GM12878 (cell line): ENCODE measurements at regions of chrX and their contacts with region 1.

Region 1: GRCh38 chrX:12946838-12947544 is 27.9 kb upstream of the TMSB4X start:
- DNase-seq: peak; percentile 85
- ATAC-seq: peak; percentile 9
- H3K4me3 ChIP-seq: no peak overlapping the region
- H3K27ac ChIP-seq: peak overlapping the region; percentile 97
- H3K4me1 ChIP-seq: peaks cover 41% of the 10 kb centered on the region
- H3K27me3 ChIP-seq: no peaks in the 10 kb centered on the region
- CTCF ChIP-seq: peak; percentile 97 to 100 (median 99); a peak in 5 of 6 replicates
- EP300 ChIP-seq: no peak
- POLR2A ChIP-seq: no peak
- RAD21 ChIP-seq: peak; percentile 98

Region 2: GRCh38 chrX:12794654-12795053 is 152.3 kb before region 1 on chrX:
- CTCF ChIA-PET with region 1: no interaction called
- POLR2A ChIA-PET with region 1: no interaction called
- RAD21 ChIA-PET with region 1: no interaction called
- SMC1A ChIA-PET with region 1: no interaction called
- in situ Hi-C with region 1: no loop called
- intact Hi-C with region 1: no loop called
- DNase-seq: no peak
- ATAC-seq: no peak
- H3K4me3 ChIP-seq: no peak overlapping the region
- H3K27ac ChIP-seq: no peak overlapping the region
- H3K4me1 ChIP-seq: no peaks in the 10 kb centered on the region
- H3K27me3 ChIP-seq: no peaks in the 10 kb centered on the region
- CTCF ChIP-seq: no peak
- EP300 ChIP-seq: no peak
- POLR2A ChIP-seq: no peak
- RAD21 ChIP-seq: no peak

Region 3: GRCh38 chrX:12936947-12937346 is 10.0 kb before region 1 on chrX:
- CTCF ChIA-PET with region 1: interaction called, 15 read pairs
- POLR2A ChIA-PET with region 1: no interaction called
- RAD21 ChIA-PET with region 1: interaction called, 7 read pairs
- SMC1A ChIA-PET with region 1: interaction called, 8 read pairs
- in situ Hi-C with region 1: no loop called
- intact Hi-C with region 1: no loop called
- DNase-seq: no peak
- ATAC-seq: no peak
- H3K4me3 ChIP-seq: no peak overlapping the region
- H3K27ac ChIP-seq: no peak overlapping the region
- H3K4me1 ChIP-seq: no peaks in the 10 kb centered on the region
- H3K27me3 ChIP-seq: no peaks in the 10 kb centered on the region
- CTCF ChIP-seq: no peak
- EP300 ChIP-seq: no peak
- POLR2A ChIP-seq: no peak
- RAD21 ChIP-seq: no peak

Region 4: GRCh38 chrX:13013363-13014110 is 66.5 kb after region 1 on chrX:
- CTCF ChIA-PET with region 1: interaction called, 123 read pairs
- POLR2A ChIA-PET with region 1: interaction called, 17 read pairs
- RAD21 ChIA-PET with region 1: interaction called, 38 read pairs
- SMC1A ChIA-PET with region 1: interaction called, 409 read pairs
- in situ Hi-C with region 1: no loop called
- intact Hi-C with region 1: no loop called
- DNase-seq: no peak
- ATAC-seq: peak; percentile 87
- H3K4me3 ChIP-seq: peak overlapping the region; percentile 14
- H3K27ac ChIP-seq: peak overlapping the region; percentile 96
- H3K4me1 ChIP-seq: peaks cover 63% of the 10 kb centered on the region
- H3K27me3 ChIP-seq: no peaks in the 10 kb centered on the region
- CTCF ChIP-seq: no peak
- EP300 ChIP-seq: 0 out of 4 replicates have a peak, but pooled peaks of 1 of the 2 experiments have one; percentile 2
- POLR2A ChIP-seq: no peak
- RAD21 ChIP-seq: no peak

Region 5: DNA sequence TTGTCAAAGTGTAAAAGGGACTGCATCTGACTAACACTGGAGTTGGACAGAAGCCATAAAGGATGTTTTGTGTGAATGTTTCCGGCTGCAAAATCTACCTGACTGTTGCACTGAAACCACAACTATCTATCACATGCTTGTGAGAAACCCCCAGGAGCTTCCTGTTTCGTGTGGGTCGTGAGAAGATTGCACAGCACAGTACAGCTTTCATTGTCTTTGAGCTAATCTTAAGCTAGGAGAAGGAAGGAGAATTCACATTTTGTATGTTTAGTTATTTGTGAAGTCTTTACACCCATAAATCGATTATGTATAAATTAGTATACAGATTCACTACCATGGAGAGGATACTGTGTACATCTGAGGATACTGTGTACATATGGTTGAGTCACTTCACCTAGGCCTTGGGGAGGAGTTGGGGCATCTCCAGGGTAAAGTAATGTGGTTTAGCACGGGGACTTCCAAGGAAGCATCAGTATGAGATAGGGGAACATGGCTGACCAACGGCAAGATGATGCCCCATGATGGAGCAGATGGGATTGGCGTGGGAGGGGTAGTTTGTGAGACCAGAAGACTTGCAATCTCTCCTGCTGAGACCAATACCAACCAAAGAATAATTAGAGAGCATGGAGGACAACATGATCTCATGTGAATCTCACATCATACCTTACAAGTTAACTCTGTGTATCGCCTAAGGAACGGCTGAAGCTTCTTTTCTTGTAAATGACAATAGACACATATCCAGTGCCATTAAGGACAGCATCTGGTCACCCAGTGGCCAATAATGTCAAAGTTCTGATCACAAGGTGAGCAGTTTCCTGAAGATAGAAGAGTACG is 140.5 kb after region 1 on chrX:
- CTCF ChIA-PET with region 1: interaction called, 312 read pairs
- POLR2A ChIA-PET with region 1: interaction called, 63 read pairs
- RAD21 ChIA-PET with region 1: interaction called, 549 read pairs
- SMC1A ChIA-PET with region 1: interaction called, 632 read pairs
- in situ Hi-C with region 1: loop called (anchors 5 kb)
- intact Hi-C with region 1: loop called (anchors 1 kb)
- DNase-seq: peak; percentile 99
- ATAC-seq: peak; percentile 54
- H3K4me3 ChIP-seq: no peak overlapping the region; the same call in 1 of the 2 replicates
- H3K27ac ChIP-seq: peak overlapping the region; percentile 100
- H3K4me1 ChIP-seq: peaks cover 89% of the 10 kb centered on the region
- H3K27me3 ChIP-seq: no peaks in the 10 kb centered on the region
- CTCF ChIP-seq: no peak
- EP300 ChIP-seq: peak; percentile 71 to 90
- POLR2A ChIP-seq: 0 out of 2 replicates have a peak, but pooled peaks have one; percentile 45
- RAD21 ChIP-seq: 0 out of 2 replicates have a peak, but pooled peaks have one; percentile 15

Region 6: GRCh38 chrX:13357925-13358324 is 410.9 kb after region 1 on chrX:
- CTCF ChIA-PET with region 1: interaction called, 17 read pairs
- POLR2A ChIA-PET with region 1: no interaction called
- RAD21 ChIA-PET with region 1: interaction called, 5 read pairs
- SMC1A ChIA-PET with region 1: interaction called, 7 read pairs
- in situ Hi-C with region 1: no loop called
- intact Hi-C with region 1: no loop called
- DNase-seq: no peak
- ATAC-seq: no peak
- H3K4me3 ChIP-seq: no peak overlapping the region
- H3K27ac ChIP-seq: no peak overlapping the region
- H3K4me1 ChIP-seq: no peaks in the 10 kb centered on the region
- H3K27me3 ChIP-seq: no peaks in the 10 kb centered on the region
- CTCF ChIP-seq: no peak
- EP300 ChIP-seq: no peak
- POLR2A ChIP-seq: no peak
- RAD21 ChIP-seq: no peak

Region 7: GRCh38 chrX:13506574-13506973 is 559.6 kb after region 1 on chrX:
- CTCF ChIA-PET with region 1: interaction called, 12 read pairs
- POLR2A ChIA-PET with region 1: no interaction called
- RAD21 ChIA-PET with region 1: interaction called, 5 read pairs
- SMC1A ChIA-PET with region 1: interaction called, 16 read pairs
- in situ Hi-C with region 1: no loop called
- intact Hi-C with region 1: no loop called
- DNase-seq: no peak
- ATAC-seq: peak; percentile 32; the same call in 1 of the 3 replicates
- H3K4me3 ChIP-seq: no peak overlapping the region
- H3K27ac ChIP-seq: no peak overlapping the region
- H3K4me1 ChIP-seq: no peaks in the 10 kb centered on the region
- H3K27me3 ChIP-seq: no peaks in the 10 kb centered on the region
- CTCF ChIP-seq: peak; percentile 71 to 82 (median 74)
- EP300 ChIP-seq: no peak
- POLR2A ChIP-seq: no peak
- RAD21 ChIP-seq: peak; percentile 96